ENCODE measurements at regions of chr10 and their contacts with region 1.

Region 1: DNA sequence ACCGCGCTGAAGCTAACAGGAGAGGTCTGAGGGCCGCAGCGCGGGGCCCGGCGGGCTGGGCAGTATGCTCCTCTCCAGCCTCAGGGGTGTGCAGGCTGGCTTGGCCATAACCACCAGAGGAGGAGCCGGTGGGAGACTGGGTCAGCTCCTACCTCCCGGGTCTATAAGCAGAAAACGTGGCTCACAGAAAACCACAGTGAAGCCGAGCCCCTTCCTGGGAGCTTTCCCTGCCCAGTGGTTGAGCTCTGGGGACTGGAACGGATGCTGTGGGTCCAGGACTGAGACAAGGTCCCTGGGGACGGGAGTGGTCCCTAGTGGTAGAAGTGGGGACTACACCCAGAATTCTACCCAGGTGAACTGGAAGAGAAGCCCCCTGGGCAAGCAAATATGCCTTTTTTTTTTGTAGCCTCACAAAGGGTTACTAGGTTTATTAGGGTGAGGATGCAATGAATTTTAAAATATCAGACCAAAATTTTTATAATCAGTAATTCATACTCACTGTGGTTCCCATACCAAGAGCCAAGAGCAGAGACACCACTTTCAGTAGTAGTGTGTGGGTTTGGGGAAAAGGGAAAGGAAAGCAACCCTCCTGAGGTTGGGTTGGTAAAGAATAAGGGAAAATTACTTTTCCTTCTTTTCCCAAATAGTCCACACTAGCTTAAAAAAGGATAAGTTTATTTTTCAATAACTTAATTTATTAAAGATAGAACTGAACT is 67.9 kb upstream of the PRKCQ start:
- DNase-seq: peak; percentile 83
- ATAC-seq: peak; percentile 82
- H3K4me3 Mint-ChIP-seq: no peak overlapping the region
- H3K27ac Mint-ChIP-seq: peak overlapping the region; percentile 42
- H3K4me1 Mint-ChIP-seq: peaks cover 47% of the 10 kb centered on the region
- H3K27me3 Mint-ChIP-seq: no peaks in the 10 kb centered on the region

Region 2: GRCh38 chr10:6445501-6446316 is 202.3 kb before region 1 on chr10:
- CTCF ChIA-PET with region 1: interaction called, 5 read pairs
- POLR2A ChIA-PET with region 1: no interaction called
- intact Hi-C with region 1: loop called in 1 of 2 experiments (anchors 2 kb)
- DNase-seq: peak; percentile 80
- ATAC-seq: peak; percentile 73
- H3K4me3 Mint-ChIP-seq: no peak overlapping the region
- H3K27ac Mint-ChIP-seq: peak overlapping the region; percentile 25
- H3K4me1 Mint-ChIP-seq: peaks cover 30% of the 10 kb centered on the region
- H3K27me3 Mint-ChIP-seq: no peaks in the 10 kb centered on the region

Region 3: GRCh38 chr10:6617309-6618076 is 30.5 kb before region 1 on chr10:
- CTCF ChIA-PET with region 1: interaction called, 7 read pairs
- POLR2A ChIA-PET with region 1: interaction called, 3 read pairs
- intact Hi-C with region 1: loop called (anchors 1 to 2 kb)
- DNase-seq: peak; percentile 46
- ATAC-seq: peak; percentile 67
- H3K4me3 Mint-ChIP-seq: no peak overlapping the region
- H3K27ac Mint-ChIP-seq: peak overlapping the region; percentile 84
- H3K4me1 Mint-ChIP-seq: peaks cover 61% of the 10 kb centered on the region
- H3K27me3 Mint-ChIP-seq: no peaks in the 10 kb centered on the region

Region 4: GRCh38 chr10:6637053-6637452 is 10.9 kb before region 1 on chr10:
- CTCF ChIA-PET with region 1: interaction called, 11 read pairs
- POLR2A ChIA-PET with region 1: no interaction called
- intact Hi-C with region 1: no loop called
- DNase-seq: no peak
- ATAC-seq: no peak
- H3K4me3 Mint-ChIP-seq: no peak overlapping the region
- H3K27ac Mint-ChIP-seq: no peak overlapping the region
- H3K4me1 Mint-ChIP-seq: peaks cover 29% of the 10 kb centered on the region
- H3K27me3 Mint-ChIP-seq: no peaks in the 10 kb centered on the region

Region 5: DNA sequence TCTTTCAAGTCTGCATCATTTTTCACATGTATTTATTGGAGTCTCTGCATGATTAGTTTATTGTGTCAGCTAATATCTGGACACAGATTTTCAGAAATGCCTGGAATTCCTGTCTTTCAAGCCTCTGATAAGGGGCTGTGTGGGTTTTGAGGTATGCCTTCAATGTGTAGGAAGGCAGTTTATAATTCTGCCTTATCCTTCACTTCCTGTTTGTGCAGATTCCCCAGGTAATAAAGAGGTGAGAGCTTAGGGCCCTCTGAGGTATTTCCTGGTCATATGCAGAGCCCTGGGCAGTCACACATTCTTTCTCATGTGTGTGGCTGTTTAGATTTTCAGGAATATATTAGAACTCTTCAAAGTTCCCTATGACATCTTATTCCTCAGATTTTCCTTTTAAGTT is 11.5 kb after region 1 on chr10:
- CTCF ChIA-PET with region 1: interaction called, 11 read pairs
- POLR2A ChIA-PET with region 1: no interaction called
- intact Hi-C with region 1: no loop called
- DNase-seq: no peak
- ATAC-seq: no peak
- H3K4me3 Mint-ChIP-seq: no peak overlapping the region
- H3K27ac Mint-ChIP-seq: no peak overlapping the region
- H3K4me1 Mint-ChIP-seq: peaks cover 4% of the 10 kb centered on the region
- H3K27me3 Mint-ChIP-seq: no peaks in the 10 kb centered on the region